Dorsolateral prefrontal cortex (tissue), 120 donors: ENCODE measurements at regions of chr12 and their contacts with region 1.

Region 1: DNA sequence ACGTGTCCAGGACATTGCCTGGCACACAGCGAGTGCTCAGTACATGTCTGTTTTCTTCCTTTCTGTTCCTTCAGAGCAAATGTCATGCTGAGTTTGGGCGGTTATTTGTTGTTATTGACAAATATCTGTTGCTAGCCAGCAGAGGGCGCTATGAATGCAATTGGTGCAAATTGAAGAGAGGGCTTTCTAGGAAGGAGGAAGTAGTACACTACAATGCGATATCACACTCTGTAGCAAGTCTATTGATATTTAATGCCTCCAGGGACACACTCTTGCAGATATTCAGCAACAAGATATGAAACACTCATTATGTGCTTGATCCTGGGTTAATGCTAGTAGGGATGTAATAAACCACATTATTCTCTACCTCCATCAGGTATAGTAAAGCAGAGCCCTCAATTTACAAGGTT is 267.3 kb upstream of the SRRM4 start:
- DNase-seq: peak in 3 of 10 donors; percentile 22 to 27 (median 22)
- H3K4me3 ChIP-seq: no peak overlapping the region
- H3K27ac ChIP-seq: no peak overlapping the region
- H3K27me3 ChIP-seq: peaks cover 0 to 3% (median 0%) of the 10 kb centered on the region in 45 donors
- CTCF ChIP-seq: peak; percentile 46 to 85 (median 69)

Region 2: GRCh38 chr12:118689793-118690192 is 24.3 kb before region 1 on chr12:
- intact Hi-C with region 1: no loop called
- DNase-seq: no peak
- H3K4me3 ChIP-seq: no peak overlapping the region
- H3K27ac ChIP-seq: no peak overlapping the region
- H3K27me3 ChIP-seq: no peaks in the 10 kb centered on the region
- CTCF ChIP-seq: no peak

Region 3: GRCh38 chr12:118830296-118830695 is 116.2 kb after region 1 on chr12:
- intact Hi-C with region 1: loop called in 1 of 2 experiments (anchors 10 kb)
- DNase-seq: peak in 3 of 10 donors; percentile 33 to 38 (median 35)
- H3K4me3 ChIP-seq: no peak overlapping the region
- H3K27ac ChIP-seq: peak overlapping the region in 35 of 59 donors; percentile 1 to 78 (median 55)
- H3K27me3 ChIP-seq: no peaks in the 10 kb centered on the region
- CTCF ChIP-seq: no peak

Region 4: GRCh38 chr12:118850244-118850825 is 136.3 kb after region 1 on chr12:
- intact Hi-C with region 1: loop called in 1 of 2 experiments (anchors 10 kb)
- DNase-seq: no peak
- H3K4me3 ChIP-seq: no peak overlapping the region
- H3K27ac ChIP-seq: no peak overlapping the region
- H3K27me3 ChIP-seq: no peaks in the 10 kb centered on the region
- CTCF ChIP-seq: peak in 35 of 56 donors; percentile 5 to 42 (median 25)